CD8-positive, alpha-beta T cell (primary cell): ENCODE measurements at regions of chr1 and their contacts with region 1.

Region 1: GRCh38 chr1:205396967-205397616 is 24.8 kb downstream of the LEMD1 start:
- DNase-seq: peak in 3 of 9 experiments; percentile 8 to 70 (median 59)
- ATAC-seq: peak; percentile 74
- H3K4me3 ChIP-seq: no peak overlapping the region
- H3K4me3 Mint-ChIP-seq: no peak overlapping the region
- H3K27ac ChIP-seq: no peak overlapping the region
- H3K27ac Mint-ChIP-seq: no peak overlapping the region
- H3K4me1 ChIP-seq: no peaks in the 10 kb centered on the region
- H3K4me1 Mint-ChIP-seq: peaks cover 3% of the 10 kb centered on the region
- H3K27me3 ChIP-seq: peaks cover 0 to 5% of the 10 kb centered on the region in 2 experiments
- H3K27me3 Mint-ChIP-seq: peaks cover 13% of the 10 kb centered on the region
- CTCF ChIP-seq: peak; percentile 85

Region 2: DNA sequence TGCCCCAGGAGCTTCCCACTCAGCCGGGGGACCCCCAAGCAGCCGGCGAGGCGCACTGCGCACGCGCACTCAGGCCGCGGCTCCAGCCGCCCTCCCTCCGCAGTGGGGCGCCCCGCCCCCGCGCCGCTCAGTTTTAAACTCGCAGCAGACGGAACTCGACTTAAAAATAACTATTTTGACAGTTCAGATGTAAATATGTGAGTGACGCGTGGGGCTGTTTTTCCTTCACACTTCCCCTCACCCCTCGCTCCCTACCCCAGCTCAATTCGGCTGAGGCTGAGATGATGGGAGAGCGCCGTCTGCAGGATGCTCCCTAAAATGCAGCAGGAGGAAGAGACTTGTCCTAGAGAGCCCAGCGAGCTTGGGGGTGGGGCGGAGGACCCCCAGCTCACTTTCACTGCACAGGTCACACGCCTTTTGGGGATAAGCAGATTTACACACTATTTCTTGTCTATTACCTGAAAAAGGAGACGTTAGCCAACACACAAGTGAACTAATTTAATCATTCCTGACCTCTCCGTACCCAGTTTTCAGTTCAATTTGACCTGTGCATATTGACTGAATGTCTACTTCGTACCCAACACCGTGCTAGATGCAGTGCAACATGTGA is 33.7 kb after region 1 on chr1:
- CTCF ChIA-PET with region 1: interaction called, 26 read pairs
- POLR2A ChIA-PET with region 1: no interaction called
- intact Hi-C with region 1: loop called (anchors 1 kb)
- DNase-seq: peak; percentile 27 to 79 (median 64)
- ATAC-seq: peak; percentile 90
- H3K4me3 ChIP-seq: peak overlapping the region; percentile 26 to 37
- H3K4me3 Mint-ChIP-seq: peak overlapping the region; percentile 86
- H3K27ac ChIP-seq: no peak overlapping the region
- H3K27ac Mint-ChIP-seq: no peak overlapping the region
- H3K4me1 ChIP-seq: peaks cover 6% of the 10 kb centered on the region
- H3K4me1 Mint-ChIP-seq: peaks cover 10% of the 10 kb centered on the region
- H3K27me3 ChIP-seq: no peaks in the 10 kb centered on the region
- H3K27me3 Mint-ChIP-seq: no peaks in the 10 kb centered on the region
- CTCF ChIP-seq: peak; percentile 58

Region 3: GRCh38 chr1:205440476-205441317 is 43.6 kb after region 1 on chr1:
- CTCF ChIA-PET with region 1: interaction called, 11 read pairs
- POLR2A ChIA-PET with region 1: no interaction called
- intact Hi-C with region 1: no loop called
- DNase-seq: peak; percentile 32 to 85 (median 75)
- ATAC-seq: peak; percentile 95
- H3K4me3 ChIP-seq: peak overlapping the region; percentile 38 to 53
- H3K4me3 Mint-ChIP-seq: peak overlapping the region; percentile 82
- H3K27ac ChIP-seq: peak overlapping the region; percentile 47 to 77
- H3K27ac Mint-ChIP-seq: peak overlapping the region; percentile 92
- H3K4me1 ChIP-seq: peaks cover 25% of the 10 kb centered on the region
- H3K4me1 Mint-ChIP-seq: peaks cover 42% of the 10 kb centered on the region
- H3K27me3 ChIP-seq: no peaks in the 10 kb centered on the region
- H3K27me3 Mint-ChIP-seq: no peaks in the 10 kb centered on the region
- CTCF ChIP-seq: no peak